Head of caudate nucleus (tissue), 42 donors: ENCODE measurements at regions of chr1 and their contacts with region 1.

Region 1: DNA sequence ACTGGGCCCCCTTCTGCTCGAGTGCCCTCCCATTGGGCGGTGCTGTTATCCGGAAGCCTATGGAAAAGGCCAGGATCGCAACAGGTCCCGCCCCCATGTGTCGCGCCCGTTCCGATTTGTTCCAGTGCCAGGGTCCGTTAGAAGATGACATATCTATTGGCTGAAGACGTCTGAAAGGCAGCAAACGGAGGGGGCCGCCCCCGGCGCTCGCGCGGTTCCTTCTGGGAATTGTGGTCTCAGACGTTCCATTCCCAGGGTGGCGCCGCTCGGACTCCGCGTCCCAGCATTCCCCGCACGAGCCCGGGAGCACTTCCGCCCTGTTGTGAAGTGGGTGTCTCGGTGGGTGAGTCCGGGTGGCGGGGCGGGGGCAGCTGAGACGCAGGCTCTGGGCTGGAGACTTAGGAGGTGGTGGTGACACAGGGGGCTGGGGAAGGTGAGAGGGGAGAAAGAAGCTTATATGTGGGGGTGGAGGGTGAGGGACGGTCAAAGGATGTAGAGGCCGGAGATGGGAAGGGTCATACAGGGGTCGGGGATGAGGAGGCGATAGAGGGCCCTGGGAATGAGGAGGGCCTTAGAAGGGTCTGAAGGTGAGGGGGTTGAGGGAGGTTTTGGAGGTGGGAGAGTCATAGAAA is at the start of gene ZSCAN20:
- DNase-seq: peak; percentile 98 to 100 (median 99)

Region 2: DNA sequence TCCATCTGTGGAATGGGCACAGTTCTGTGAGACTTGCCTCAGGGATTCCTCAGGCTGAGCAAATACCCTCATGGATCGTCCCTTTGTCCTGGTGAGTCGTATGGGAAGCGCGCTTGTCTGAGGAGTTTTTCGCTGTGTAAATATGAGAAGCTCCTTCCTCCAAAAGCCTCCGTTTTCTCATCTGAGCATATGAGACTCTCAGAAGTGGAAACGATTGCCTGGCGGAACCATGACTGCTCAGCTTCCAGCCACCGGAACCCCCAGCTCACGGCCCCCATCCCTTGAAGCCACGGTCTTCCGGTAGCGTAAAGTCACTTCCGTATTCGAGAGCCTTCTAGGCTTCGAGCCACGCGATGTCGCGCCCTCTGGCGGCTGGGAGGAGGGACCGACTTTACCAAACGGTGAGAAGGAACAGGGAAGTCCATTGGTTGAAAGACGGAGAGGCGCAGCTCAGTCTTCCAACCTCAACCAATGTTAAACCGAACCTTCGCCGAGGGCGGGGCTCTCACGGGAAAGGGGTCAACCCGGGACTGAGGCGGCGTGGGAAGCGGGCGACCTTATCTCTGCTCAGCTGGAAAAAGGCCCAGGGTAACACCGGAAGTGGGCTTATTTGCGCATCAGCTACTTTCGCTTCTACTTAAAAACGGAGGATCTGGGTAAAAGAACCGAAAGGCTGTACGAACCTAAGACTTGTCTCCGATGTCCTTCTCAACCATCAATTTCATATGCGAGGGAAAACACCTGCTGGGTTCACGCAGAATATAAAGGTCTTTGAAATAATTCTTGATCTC is 345.3 kb before region 1 on chr1:
- intact Hi-C with region 1: loop called (anchors 10 kb)
- DNase-seq: peak; percentile 94 to 99 (median 98)

Region 3: GRCh38 chr1:33295450-33296081 is 176.9 kb before region 1 on chr1:
- intact Hi-C with region 1: loop called (anchors 2 kb)
- DNase-seq: peak; percentile 59 to 98 (median 93)